WTC11 (cell line): ENCODE measurements at regions of chr12 and their contacts with region 1.

Region 1: GRCh38 chr12:22443379-22444316 is 100.7 kb downstream of the C2CD5 start:
- DNase-seq: peak; percentile 55
- ATAC-seq: peak; percentile 100
- H3K4me3 Mint-ChIP-seq: no peak overlapping the region; the same call in 1 of the 2 replicates
- H3K27ac Mint-ChIP-seq: no peak overlapping the region
- H3K4me1 Mint-ChIP-seq: peaks cover 9% of the 10 kb centered on the region
- H3K27me3 Mint-ChIP-seq: no peaks in the 10 kb centered on the region
- CTCF ChIP-seq: peak; percentile 68

Region 2: DNA sequence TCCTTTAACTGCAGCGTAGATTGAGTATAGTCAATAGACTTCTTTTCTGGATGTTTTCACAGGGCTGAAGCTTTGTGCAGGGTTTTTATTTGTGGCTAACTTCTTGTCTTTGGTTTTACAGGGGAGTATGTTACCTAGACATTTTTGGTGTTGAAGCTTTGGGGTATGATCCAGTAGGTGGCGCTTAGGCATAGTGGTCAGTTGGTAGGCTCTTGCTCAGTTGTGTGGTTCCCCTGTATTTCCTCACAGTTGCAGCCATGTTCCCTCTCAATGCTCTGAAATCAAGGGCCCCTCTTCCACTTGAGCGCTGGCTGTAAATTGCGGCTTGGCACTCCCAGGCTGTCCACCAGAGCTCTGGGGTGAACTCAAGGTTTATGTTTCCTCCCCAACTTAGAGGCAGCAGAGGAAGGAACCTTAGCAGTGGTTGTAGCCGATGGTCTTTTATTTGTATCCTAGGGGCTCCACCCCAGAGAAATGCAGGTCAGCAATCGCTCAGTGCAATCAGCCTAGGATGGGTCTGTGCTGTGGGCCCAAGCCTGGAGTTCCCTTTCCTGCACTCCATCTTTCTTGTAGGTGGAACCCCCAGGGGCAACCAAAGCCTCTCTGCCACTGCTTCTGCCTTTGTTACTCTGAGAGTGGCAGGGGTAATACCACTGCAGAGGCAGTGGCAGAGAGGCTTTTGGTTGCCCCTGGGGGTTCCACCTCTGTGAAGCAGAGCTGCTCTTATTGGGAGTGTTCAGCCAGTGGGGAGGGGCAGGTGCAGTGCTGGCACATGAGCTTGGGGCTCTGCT is 342.5 kb before region 1 on chr12:
- CTCF ChIA-PET with region 1: interaction called, 10 read pairs
- POLR2A ChIA-PET with region 1: no interaction called
- DNase-seq: peak; percentile 44
- ATAC-seq: peak; percentile 93
- H3K4me3 Mint-ChIP-seq: no peak overlapping the region
- H3K27ac Mint-ChIP-seq: no peak overlapping the region
- H3K4me1 Mint-ChIP-seq: no peaks in the 10 kb centered on the region
- H3K27me3 Mint-ChIP-seq: no peaks in the 10 kb centered on the region
- CTCF ChIP-seq: peak; percentile 36; the same call in 1 of the 2 replicates

Region 3: GRCh38 chr12:22121227-22121626 is 322.4 kb before region 1 on chr12:
- CTCF ChIA-PET with region 1: interaction called, 12 read pairs
- POLR2A ChIA-PET with region 1: no interaction called
- DNase-seq: peak; percentile 75
- ATAC-seq: peak; percentile 100
- H3K4me3 Mint-ChIP-seq: no peak overlapping the region
- H3K27ac Mint-ChIP-seq: no peak overlapping the region
- H3K4me1 Mint-ChIP-seq: no peaks in the 10 kb centered on the region
- H3K27me3 Mint-ChIP-seq: no peaks in the 10 kb centered on the region
- CTCF ChIP-seq: peak; percentile 54

Region 4: DNA sequence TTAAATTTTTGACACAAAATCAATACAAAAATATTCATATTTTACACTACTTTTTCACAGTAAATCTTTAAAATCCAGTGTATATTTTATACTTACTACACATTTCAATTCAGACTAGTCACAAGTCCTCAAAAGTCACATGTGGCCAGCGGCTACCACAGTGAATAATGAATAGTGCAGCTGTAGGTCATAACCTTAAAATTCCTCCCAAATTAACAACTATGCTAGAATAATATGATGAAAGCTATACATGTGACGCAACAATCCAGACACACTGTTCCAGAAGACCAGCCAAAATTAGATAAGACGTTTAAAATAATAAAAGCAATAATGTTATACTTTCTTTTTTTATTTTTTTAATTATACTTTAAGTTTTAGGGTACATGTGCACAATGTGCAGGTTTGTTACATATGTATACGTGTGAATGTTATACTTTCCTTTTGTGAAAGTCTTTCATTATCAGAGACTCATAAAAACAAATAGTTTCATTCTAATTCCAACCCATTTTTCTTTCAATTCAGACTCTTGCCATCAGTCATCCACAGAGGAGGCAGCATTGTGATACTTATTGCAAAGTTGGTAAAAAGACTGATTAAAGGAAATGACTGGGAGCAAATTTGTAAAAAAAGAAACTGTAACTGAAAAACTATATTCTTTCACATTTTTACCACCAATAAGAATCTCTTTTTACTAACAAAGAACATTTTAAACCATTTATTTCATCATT is 33.7 kb after region 1 on chr12:
- CTCF ChIA-PET with region 1: no interaction called
- POLR2A ChIA-PET with region 1: no interaction called
- DNase-seq: no peak
- ATAC-seq: no peak
- H3K4me3 Mint-ChIP-seq: no peak overlapping the region
- H3K27ac Mint-ChIP-seq: no peak overlapping the region
- H3K4me1 Mint-ChIP-seq: no peaks in the 10 kb centered on the region
- H3K27me3 Mint-ChIP-seq: no peaks in the 10 kb centered on the region
- CTCF ChIP-seq: no peak